H1 (cell line): ENCODE measurements at regions of chr1 and their contacts with region 1.

Region 1: DNA sequence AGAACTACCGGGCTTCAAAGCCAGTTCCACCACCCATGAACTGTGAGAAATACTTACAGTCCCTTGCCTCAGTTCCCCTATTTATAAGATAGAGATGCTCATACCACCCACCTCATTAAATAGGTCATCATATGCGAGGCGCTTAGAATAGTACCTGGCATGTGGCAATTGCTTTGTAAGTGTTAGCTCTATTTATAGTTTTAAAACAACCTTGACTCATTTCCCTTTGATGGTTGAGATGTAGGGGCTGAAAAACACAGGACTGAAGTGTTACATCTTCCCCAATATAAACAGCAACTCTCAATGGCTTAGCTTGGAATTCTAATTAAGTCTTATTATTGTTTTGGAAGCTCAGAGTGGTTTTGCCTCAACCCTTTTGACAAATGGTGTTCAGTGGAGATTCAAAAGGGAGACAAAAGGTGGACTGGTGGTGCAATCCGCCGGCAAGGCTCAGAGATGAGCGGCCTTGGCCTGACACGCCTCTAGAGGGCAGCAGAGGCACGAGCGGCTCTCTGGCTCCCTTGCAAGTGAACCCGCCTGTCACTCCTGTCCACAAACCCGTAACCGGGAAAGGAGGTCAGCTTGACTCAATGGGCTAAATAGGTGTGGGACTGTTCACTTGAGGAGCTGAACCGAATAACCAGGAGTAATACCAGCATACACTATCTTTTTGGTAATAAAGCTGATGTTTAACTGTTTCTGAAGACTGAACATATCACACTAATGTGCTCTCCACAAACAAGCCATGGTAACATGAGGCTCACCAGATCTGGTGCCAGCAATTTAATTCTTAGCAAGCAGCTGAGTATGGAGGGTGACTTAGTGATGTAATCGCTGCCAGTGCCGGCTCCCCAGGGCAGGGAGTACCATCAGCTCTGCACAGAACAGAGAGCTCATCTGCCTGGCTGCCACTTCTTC is 19.5 kb upstream of the SMYD2 start:
- DNase-seq: peak in 1 of 2 experiments; percentile 95
- H3K4me3 ChIP-seq: no peak overlapping the region
- H3K27ac ChIP-seq: no peak overlapping the region
- H3K4me1 ChIP-seq: peaks cover 0 to 3% (median 0%) of the 10 kb centered on the region in 4 experiments; a peak in 2 of 7 replicates
- H3K27me3 ChIP-seq: 0 out of 7 replicates have a peak, but pooled peaks cover 0 to 1% (median 0%) of the 10 kb centered on the region in 4 experiments
- CTCF ChIP-seq: peak; percentile 89 to 96 (median 95)
- EP300 ChIP-seq: no peak
- POLR2A ChIP-seq: no peak
- RAD21 ChIP-seq: peak; percentile 91 to 93

Region 2: DNA sequence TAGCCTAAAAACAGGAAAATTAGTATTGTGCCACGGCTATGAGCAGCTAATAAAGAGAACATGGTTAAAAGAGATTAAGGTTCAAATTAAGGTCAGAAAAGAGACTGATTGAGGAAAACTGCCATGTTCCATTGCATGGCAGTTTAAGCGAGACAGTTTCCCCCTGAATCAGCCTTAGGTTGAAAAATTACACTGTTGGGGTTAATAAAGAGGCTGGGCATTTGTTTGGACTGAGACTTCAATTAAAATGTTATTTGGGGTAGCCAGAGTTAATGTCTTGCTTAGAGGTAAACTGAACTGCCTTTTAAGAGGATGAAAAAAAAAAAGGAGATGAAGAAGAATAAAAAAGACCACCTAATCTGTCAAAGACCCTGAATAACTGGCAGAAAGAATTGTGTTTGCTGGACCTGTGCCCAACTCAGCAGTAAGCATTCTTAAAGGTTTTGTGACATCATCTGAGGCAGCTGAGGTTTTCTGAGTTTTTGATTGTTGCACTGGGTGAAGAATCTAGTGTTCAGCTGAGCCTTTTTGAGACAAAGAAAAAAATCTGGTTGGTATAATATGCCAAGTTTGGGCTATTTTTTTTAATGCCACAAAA is 291.4 kb before region 1 on chr1:
- CTCF ChIA-PET with region 1: no interaction called
- POLR2A ChIA-PET with region 1: no interaction called
- DNase-seq: no peak
- H3K4me3 ChIP-seq: no peak overlapping the region
- H3K27ac ChIP-seq: no peak overlapping the region
- H3K4me1 ChIP-seq: no peaks in the 10 kb centered on the region
- H3K27me3 ChIP-seq: peaks cover 0 to 2% (median 0%) of the 10 kb centered on the region in 4 experiments; a peak in 1 of 7 replicates
- CTCF ChIP-seq: no peak
- EP300 ChIP-seq: no peak
- POLR2A ChIP-seq: no peak
- RAD21 ChIP-seq: no peak

Region 3: GRCh38 chr1:214213136-214213535 is 48.3 kb before region 1 on chr1:
- CTCF ChIA-PET with region 1: interaction called, 108 read pairs
- POLR2A ChIA-PET with region 1: no interaction called
- DNase-seq: no peak
- H3K4me3 ChIP-seq: no peak overlapping the region
- H3K27ac ChIP-seq: no peak overlapping the region
- H3K4me1 ChIP-seq: peaks cover 4 to 9% (median 7%) of the 10 kb centered on the region in 4 experiments; a peak in 6 of 7 replicates
- H3K27me3 ChIP-seq: no peaks in the 10 kb centered on the region
- CTCF ChIP-seq: no peak
- EP300 ChIP-seq: no peak
- POLR2A ChIP-seq: no peak
- RAD21 ChIP-seq: no peak

Region 4: GRCh38 chr1:214248311-214249085 is 13.0 kb before region 1 on chr1:
- CTCF ChIA-PET with region 1: interaction called, 43 read pairs
- POLR2A ChIA-PET with region 1: interaction called, 3 read pairs
- DNase-seq: no peak
- H3K4me3 ChIP-seq: no peak overlapping the region
- H3K27ac ChIP-seq: no peak overlapping the region
- H3K4me1 ChIP-seq: peaks cover 1 to 8% (median 4%) of the 10 kb centered on the region in 4 experiments; a peak in 4 of 7 replicates
- H3K27me3 ChIP-seq: no peaks in the 10 kb centered on the region
- CTCF ChIP-seq: no peak
- EP300 ChIP-seq: no peak
- POLR2A ChIP-seq: no peak
- RAD21 ChIP-seq: no peak

Region 5: GRCh38 chr1:214296860-214297745 is 35.6 kb after region 1 on chr1:
- CTCF ChIA-PET with region 1: interaction called, 22 read pairs
- POLR2A ChIA-PET with region 1: no interaction called
- DNase-seq: no peak
- H3K4me3 ChIP-seq: peak overlapping the region in 1 of 4 experiments; percentile 13; a peak in 1 of 8 replicates
- H3K27ac ChIP-seq: no peak overlapping the region
- H3K4me1 ChIP-seq: peaks cover 0 to 4% (median 2%) of the 10 kb centered on the region in 4 experiments; a peak in 3 of 7 replicates
- H3K27me3 ChIP-seq: peaks cover 2 to 24% (median 21%) of the 10 kb centered on the region in 4 experiments
- CTCF ChIP-seq: no peak
- EP300 ChIP-seq: no peak
- POLR2A ChIP-seq: no peak
- RAD21 ChIP-seq: no peak

Region 6: GRCh38 chr1:214321705-214322453 is 60.4 kb after region 1 on chr1:
- CTCF ChIA-PET with region 1: interaction called, 610 read pairs
- POLR2A ChIA-PET with region 1: interaction called, 4 read pairs
- DNase-seq: no peak
- H3K4me3 ChIP-seq: no peak overlapping the region
- H3K27ac ChIP-seq: no peak overlapping the region
- H3K4me1 ChIP-seq: peaks cover 3 to 14% (median 9%) of the 10 kb centered on the region in 4 experiments; a peak in 6 of 7 replicates
- H3K27me3 ChIP-seq: peaks cover 9 to 23% (median 18%) of the 10 kb centered on the region in 4 experiments; a peak in 6 of 7 replicates
- CTCF ChIP-seq: no peak
- EP300 ChIP-seq: no peak
- POLR2A ChIP-seq: no peak
- RAD21 ChIP-seq: no peak

Region 7: GRCh38 chr1:214719207-214719606 is 457.7 kb after region 1 on chr1:
- CTCF ChIA-PET with region 1: no interaction called
- POLR2A ChIA-PET with region 1: no interaction called
- DNase-seq: no peak
- H3K4me3 ChIP-seq: no peak overlapping the region
- H3K27ac ChIP-seq: no peak overlapping the region
- H3K4me1 ChIP-seq: no peaks in the 10 kb centered on the region
- H3K27me3 ChIP-seq: no peaks in the 10 kb centered on the region
- CTCF ChIP-seq: peak in 1 of 3 experiments; percentile 37; a peak in 1 of 4 replicates
- EP300 ChIP-seq: no peak
- POLR2A ChIP-seq: no peak
- RAD21 ChIP-seq: peak in 1 of 2 experiments; percentile 38; a peak in 1 of 4 replicates